Transverse colon (tissue), 4 donors: ENCODE measurements at regions of chr11 and their contacts with region 1.

Region 1: GRCh38 chr11:55263081-55263480 is 1.1 kb downstream of the TRIM48 start:
- DNase-seq: no peak
- H3K4me3 ChIP-seq: no peak overlapping the region
- H3K27ac ChIP-seq: no peak overlapping the region
- H3K4me1 ChIP-seq: no peaks in the 10 kb centered on the region
- H3K27me3 ChIP-seq: no peaks in the 10 kb centered on the region
- CTCF ChIP-seq: no peak
- EP300 ChIP-seq: no peak
- POLR2A ChIP-seq: no peak

Region 2: DNA sequence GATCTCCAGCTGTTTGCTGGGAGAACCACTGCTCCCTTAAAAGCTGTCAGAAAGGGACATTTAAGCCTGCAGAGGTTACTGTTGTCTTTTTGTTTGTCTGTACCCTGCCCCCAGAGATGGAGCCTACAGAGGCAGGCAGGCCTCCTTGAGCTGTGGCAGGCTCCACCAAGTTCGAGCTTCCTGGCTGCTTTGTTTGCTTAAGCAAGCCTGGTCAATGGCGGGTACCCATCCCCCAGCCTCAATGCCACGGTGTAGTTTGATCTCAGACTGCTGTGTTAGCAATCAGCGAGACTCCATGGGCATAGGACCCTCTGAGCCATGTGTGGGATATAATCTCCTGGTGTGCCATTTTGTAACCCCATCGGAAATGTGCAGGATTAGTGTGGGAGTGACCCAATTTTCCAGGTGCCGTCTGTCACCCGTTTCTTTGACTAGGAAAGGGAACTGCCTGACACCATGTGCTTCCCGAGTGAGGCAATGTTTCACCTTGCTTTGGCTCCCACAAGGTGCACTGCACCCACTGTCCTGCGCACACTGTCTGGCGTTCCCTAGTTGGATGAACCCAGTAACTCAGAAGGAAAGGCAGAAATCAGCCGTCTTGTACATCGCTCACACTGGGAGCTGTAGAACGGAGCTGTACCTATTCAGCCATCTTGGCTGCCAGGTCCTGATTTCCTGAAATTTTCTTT is 24.6 kb before region 1 on chr11:
- in situ Hi-C with region 1: no loop called
- intact Hi-C with region 1: no loop called
- DNase-seq: no peak
- H3K4me3 ChIP-seq: no peak overlapping the region
- H3K27ac ChIP-seq: no peak overlapping the region
- H3K4me1 ChIP-seq: no peaks in the 10 kb centered on the region
- H3K27me3 ChIP-seq: no peaks in the 10 kb centered on the region
- CTCF ChIP-seq: no peak
- EP300 ChIP-seq: no peak
- POLR2A ChIP-seq: no peak

Region 3: GRCh38 chr11:55342901-55343300 is 79.8 kb after region 1 on chr11 and contains the start of gene OR4A16:
- in situ Hi-C with region 1: no loop called
- intact Hi-C with region 1: loop called (anchors 2 kb)
- DNase-seq: no peak
- H3K4me3 ChIP-seq: no peak within 1 kb of the TSS
- H3K27ac ChIP-seq: no peak within 1 kb of the TSS
- H3K4me1 ChIP-seq: no peaks in the 10 kb centered on the region
- H3K27me3 ChIP-seq: no peaks in the 10 kb centered on the region
- CTCF ChIP-seq: no peak
- EP300 ChIP-seq: no peak
- POLR2A ChIP-seq: no peak
- total RNA-seq, gene OR4A16: not detected

Region 4: GRCh38 chr11:55457641-55458040 is 194.6 kb after region 1 on chr11:
- in situ Hi-C with region 1: no loop called
- intact Hi-C with region 1: no loop called
- DNase-seq: no peak
- H3K4me3 ChIP-seq: no peak overlapping the region
- H3K27ac ChIP-seq: no peak overlapping the region
- H3K4me1 ChIP-seq: no peaks in the 10 kb centered on the region
- H3K27me3 ChIP-seq: no peaks in the 10 kb centered on the region
- CTCF ChIP-seq: no peak
- EP300 ChIP-seq: no peak
- POLR2A ChIP-seq: no peak

Region 5: DNA sequence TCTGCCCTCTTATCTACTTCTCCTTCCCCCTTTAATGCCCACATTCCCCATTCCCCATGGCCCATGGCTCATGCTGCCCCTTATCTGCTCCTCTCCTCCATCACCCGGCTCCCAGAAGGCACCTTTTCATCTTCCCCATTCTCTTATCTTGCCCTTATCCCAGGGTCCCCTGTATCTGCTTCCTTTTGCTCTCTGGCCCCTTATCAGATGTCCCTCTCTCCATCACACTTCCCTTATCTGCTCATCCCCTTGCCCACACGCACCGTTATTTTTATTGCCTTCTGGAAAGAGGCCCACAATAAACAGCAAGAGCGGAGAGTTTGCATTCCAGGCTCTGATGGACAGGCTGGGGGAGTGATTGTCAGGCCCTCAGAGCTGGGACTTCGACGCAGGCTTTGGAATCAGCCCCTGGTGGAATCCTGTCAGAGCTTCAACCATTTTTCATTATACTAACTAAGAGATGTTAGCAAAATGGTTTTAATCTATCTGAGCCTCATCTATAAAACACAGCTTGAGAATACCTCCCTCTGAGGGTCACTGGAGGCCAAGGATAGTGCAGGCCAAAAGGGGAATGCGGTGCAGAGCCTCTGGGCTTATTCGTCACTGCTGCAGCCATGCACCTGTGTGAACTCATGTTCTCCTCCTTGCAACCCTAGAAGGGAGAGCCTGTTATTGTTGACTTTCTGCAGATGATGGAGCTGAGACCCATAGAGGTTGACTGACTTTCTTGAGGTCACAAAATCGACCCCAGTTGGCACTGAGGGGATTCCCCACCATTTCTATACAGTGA is 1881.6 kb after region 1 on chr11:
- in situ Hi-C with region 1: no loop called
- intact Hi-C with region 1: loop called (anchors 5 kb)
- DNase-seq: no peak
- H3K4me3 ChIP-seq: no peak overlapping the region
- H3K27ac ChIP-seq: no peak overlapping the region
- H3K4me1 ChIP-seq: no peaks in the 10 kb centered on the region
- H3K27me3 ChIP-seq: no peaks in the 10 kb centered on the region
- CTCF ChIP-seq: no peak
- EP300 ChIP-seq: no peak
- POLR2A ChIP-seq: no peak